ENCODE measurements at regions of chr21 and their contacts with region 1.

Region 1: DNA sequence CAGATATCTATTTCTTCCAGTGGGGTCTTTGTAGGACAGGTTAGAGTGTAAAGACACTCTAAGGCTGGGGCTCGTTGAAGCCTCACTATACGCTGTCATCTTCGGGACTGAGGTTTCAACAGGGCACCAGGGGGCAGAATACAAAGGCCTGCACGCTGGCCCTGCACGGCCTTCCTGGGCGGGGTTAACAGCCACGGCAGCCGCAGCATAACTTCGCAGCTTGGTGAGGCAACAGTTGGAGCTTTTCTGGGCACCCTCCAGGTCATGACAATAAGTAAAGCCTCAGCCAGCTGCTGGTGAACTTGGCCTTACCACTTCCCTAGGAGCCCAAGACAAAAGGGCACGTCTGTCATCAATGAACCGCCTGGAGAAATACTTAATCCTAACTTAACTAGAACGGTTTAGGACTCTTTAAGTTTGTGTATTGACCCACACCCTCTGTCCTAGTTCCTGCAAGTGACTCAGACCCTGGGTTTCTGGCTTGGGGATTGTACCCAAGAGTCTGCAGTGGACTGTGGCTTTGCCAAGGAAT is 2.3 kb upstream of the RUNX1 start:
- DNase-seq: peak; percentile 95
- H3K4me3 Mint-ChIP-seq: no peak overlapping the region
- H3K27ac Mint-ChIP-seq: peak overlapping the region; percentile 83
- H3K4me1 Mint-ChIP-seq: peaks cover 48% of the 10 kb centered on the region
- H3K27me3 Mint-ChIP-seq: no peaks in the 10 kb centered on the region
- CTCF ChIP-seq: peak; percentile 73

Region 2: DNA sequence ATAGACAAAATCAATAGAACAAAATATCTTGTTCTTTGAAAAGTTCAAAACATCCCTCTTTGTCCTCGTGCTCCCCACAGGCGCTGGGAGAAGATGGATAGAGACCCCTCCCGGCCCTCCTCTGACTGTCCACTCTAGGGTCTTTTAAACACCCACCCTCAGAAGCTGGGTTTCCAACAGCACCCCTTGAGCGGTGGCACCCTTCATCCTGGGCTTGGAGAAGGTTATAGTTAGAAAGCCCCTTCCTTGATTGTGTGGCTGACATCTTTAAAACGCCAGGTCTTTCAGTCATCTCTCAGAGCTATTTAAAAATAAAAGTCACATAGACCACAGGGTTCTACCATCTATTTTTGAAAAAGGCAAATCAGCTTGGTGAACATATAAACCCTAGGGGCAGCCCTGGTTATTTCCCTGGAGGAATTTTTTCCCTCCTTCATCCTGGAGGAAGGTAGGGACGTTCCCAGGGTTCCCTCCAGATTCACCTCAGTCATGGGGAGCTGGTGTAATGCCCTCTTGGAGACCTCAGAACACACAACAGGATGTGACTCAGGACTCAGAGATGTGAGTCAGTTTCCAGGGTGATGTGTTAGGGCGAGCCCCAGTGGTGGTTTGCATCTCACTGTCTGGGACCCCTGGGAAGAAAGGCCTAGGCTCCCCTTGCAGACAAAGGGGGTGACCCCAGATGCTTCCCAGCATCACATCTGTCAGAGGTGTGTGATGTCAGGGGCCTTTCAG is 244.0 kb before region 1 on chr21:
- CTCF ChIA-PET with region 1: interaction called, 4 read pairs
- POLR2A ChIA-PET with region 1: interaction called, 3 read pairs
- intact Hi-C with region 1: loop called (anchors 5 kb)
- DNase-seq: peak; percentile 98
- H3K4me3 Mint-ChIP-seq: peak overlapping the region; percentile 47
- H3K27ac Mint-ChIP-seq: peak overlapping the region; percentile 99
- H3K4me1 Mint-ChIP-seq: peaks cover 40% of the 10 kb centered on the region
- H3K27me3 Mint-ChIP-seq: no peaks in the 10 kb centered on the region
- CTCF ChIP-seq: no peak

Region 3: GRCh38 chr21:34908419-34909055 is 142.8 kb before region 1 on chr21:
- CTCF ChIA-PET with region 1: no interaction called
- POLR2A ChIA-PET with region 1: interaction called, 3 read pairs
- intact Hi-C with region 1: loop called (anchors 5 kb)
- DNase-seq: peak; percentile 74
- H3K4me3 Mint-ChIP-seq: peak overlapping the region; percentile 47
- H3K27ac Mint-ChIP-seq: peak overlapping the region; percentile 6
- H3K4me1 Mint-ChIP-seq: peaks cover 29% of the 10 kb centered on the region
- H3K27me3 Mint-ChIP-seq: no peaks in the 10 kb centered on the region
- CTCF ChIP-seq: no peak

Region 4: GRCh38 chr21:35217504-35218060 is 166.2 kb after region 1 on chr21:
- CTCF ChIA-PET with region 1: interaction called, 5 read pairs
- POLR2A ChIA-PET with region 1: interaction called, 11 read pairs
- intact Hi-C with region 1: loop called (anchors 1 kb)
- DNase-seq: peak; percentile 88
- H3K4me3 Mint-ChIP-seq: no peak overlapping the region
- H3K27ac Mint-ChIP-seq: peak overlapping the region; percentile 96
- H3K4me1 Mint-ChIP-seq: peaks cover 19% of the 10 kb centered on the region
- H3K27me3 Mint-ChIP-seq: no peaks in the 10 kb centered on the region
- CTCF ChIP-seq: no peak

Region 5: GRCh38 chr21:35275760-35276159 is 224.4 kb after region 1 on chr21:
- CTCF ChIA-PET with region 1: no interaction called
- POLR2A ChIA-PET with region 1: no interaction called
- intact Hi-C with region 1: loop called (anchors 5 kb)
- DNase-seq: no peak
- H3K4me3 Mint-ChIP-seq: no peak overlapping the region
- H3K27ac Mint-ChIP-seq: no peak overlapping the region
- H3K4me1 Mint-ChIP-seq: peaks cover 26% of the 10 kb centered on the region
- H3K27me3 Mint-ChIP-seq: no peaks in the 10 kb centered on the region
- CTCF ChIP-seq: no peak

Region 6: GRCh38 chr21:35616090-35616489 is 564.7 kb after region 1 on chr21:
- CTCF ChIA-PET with region 1: interaction called, 3 read pairs
- POLR2A ChIA-PET with region 1: no interaction called
- intact Hi-C with region 1: loop called (anchors 2 kb)
- DNase-seq: peak; percentile 44
- H3K4me3 Mint-ChIP-seq: no peak overlapping the region
- H3K27ac Mint-ChIP-seq: no peak overlapping the region
- H3K4me1 Mint-ChIP-seq: peaks cover 27% of the 10 kb centered on the region
- H3K27me3 Mint-ChIP-seq: no peaks in the 10 kb centered on the region
- CTCF ChIP-seq: peak; percentile 47

Measured in MCF 10A (cell line).